Ascending aorta (tissue), 2 donors: ENCODE measurements at regions of chr13 and their contacts with region 1.

Region 1: DNA sequence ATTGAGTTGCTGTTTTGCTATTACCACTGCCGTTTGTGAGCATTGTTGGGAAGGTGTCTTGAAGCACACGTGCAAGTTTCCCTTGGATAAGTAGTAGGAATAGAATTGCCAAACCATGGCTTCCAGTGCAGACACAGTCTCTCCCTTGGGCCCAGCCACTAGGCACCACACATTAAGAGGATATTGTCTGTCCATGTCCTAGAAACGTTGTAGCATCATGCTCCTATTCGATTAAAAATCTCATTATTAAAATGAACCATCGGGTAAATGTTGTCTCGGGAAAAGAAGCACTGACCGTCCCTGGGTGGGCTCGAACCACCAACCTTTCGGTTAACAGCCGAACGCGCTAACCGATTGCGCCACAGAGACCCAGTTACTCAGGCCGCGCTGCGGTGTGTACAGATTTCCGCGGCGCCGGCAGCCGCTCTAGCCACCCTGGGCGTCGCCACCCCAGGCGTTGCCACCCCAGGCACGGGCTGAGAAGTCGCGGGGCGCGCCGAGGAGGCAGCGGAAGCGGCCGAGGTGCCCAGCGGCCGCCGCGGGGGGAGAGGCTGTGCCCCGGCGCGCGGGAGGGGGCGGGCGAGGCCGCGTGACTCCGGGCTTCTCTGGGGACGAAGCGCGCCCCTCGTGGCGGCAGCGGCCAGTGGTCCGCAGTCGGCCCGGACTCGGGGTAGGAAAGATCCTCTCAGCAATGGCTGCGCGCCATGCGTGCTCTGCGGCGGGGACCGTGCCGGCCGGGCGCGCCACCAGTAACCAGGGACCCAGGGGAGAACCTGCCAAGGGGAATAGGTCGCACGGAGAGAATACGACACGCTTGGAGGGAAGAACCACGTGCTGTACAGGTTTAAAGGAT is 56.2 kb downstream of the USPL1 start:
- DNase-seq: peak; percentile 79 to 96
- H3K4me3 ChIP-seq: peak overlapping the region; percentile 53 to 64
- H3K27ac ChIP-seq: peak overlapping the region; percentile 59 to 88
- H3K4me1 ChIP-seq: no peaks in the 10 kb centered on the region
- H3K27me3 ChIP-seq: no peaks in the 10 kb centered on the region
- CTCF ChIP-seq: peak; percentile 58 to 81 (median 61)

Region 2: GRCh38 chr13:30535046-30535445 is 138.8 kb before region 1 on chr13:
- intact Hi-C with region 1: no loop called
- DNase-seq: no peak
- H3K4me3 ChIP-seq: no peak overlapping the region
- H3K27ac ChIP-seq: no peak overlapping the region
- H3K4me1 ChIP-seq: no peaks in the 10 kb centered on the region
- H3K27me3 ChIP-seq: no peaks in the 10 kb centered on the region
- CTCF ChIP-seq: no peak

Region 3: GRCh38 chr13:30739761-30740642 is 66.1 kb after region 1 on chr13:
- intact Hi-C with region 1: loop called (anchors 2 kb)
- DNase-seq: no peak
- H3K4me3 ChIP-seq: no peak overlapping the region
- H3K27ac ChIP-seq: peak overlapping the region; percentile 3 to 20
- H3K4me1 ChIP-seq: peaks cover 0 to 21% of the 10 kb centered on the region in 2 donors
- H3K27me3 ChIP-seq: no peaks in the 10 kb centered on the region
- CTCF ChIP-seq: no peak

Region 4: DNA sequence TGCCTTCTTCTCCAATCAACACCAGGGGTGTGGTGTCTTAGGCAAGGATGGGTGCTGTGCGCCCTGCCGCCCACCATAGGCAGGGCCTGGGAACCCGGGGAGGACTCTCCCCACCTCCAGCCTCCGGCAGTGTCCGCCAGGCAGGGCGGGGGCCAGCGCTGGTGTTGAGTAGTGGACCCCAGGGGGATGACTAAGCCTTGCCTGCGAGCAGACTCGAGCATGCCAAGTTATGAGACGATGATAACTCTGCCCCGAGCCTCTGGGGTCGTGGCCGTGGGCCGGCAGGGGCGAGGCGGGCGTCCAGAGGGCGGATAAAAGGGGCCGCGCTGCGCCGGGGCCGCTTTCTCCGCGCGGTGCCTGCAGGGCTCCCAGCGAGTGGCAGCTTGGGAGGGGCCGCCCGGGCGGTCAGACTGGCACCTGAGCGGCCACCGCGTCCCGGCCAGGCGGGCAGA is 232.1 kb after region 1 on chr13 and contains the start of gene MEDAG:
- intact Hi-C with region 1: loop called (anchors 2 kb)
- DNase-seq: peak; percentile 76 to 96
- H3K4me3 ChIP-seq: peak within 1 kb of the TSS; percentile 56 to 81
- H3K27ac ChIP-seq: peak within 1 kb of the TSS; percentile 95 to 98
- H3K4me1 ChIP-seq: peaks cover 0 to 21% of the 10 kb centered on the region in 2 donors
- H3K27me3 ChIP-seq: no peaks in the 10 kb centered on the region
- CTCF ChIP-seq: no peak
- total RNA-seq, gene MEDAG: 98.8 TPM